ENCODE measurements at regions of chr1 and their contacts with region 1.

Region 1: GRCh38 chr1:245337829-245338484 is 183.2 kb downstream of the KIF26B start:
- DNase-seq: no peak
- H3K27ac ChIP-seq: no peak overlapping the region
- CTCF ChIP-seq: no peak

Region 2: GRCh38 chr1:245458719-245459181 is 120.8 kb after region 1 on chr1:
- CTCF ChIA-PET with region 1: no interaction called
- POLR2A ChIA-PET with region 1: interaction called, 11 read pairs
- DNase-seq: peak; percentile 30
- H3K27ac ChIP-seq: no peak overlapping the region
- CTCF ChIP-seq: no peak

Region 3: GRCh38 chr1:246128494-246129069 is 790.6 kb after region 1 on chr1:
- CTCF ChIA-PET with region 1: interaction called, 10 read pairs
- POLR2A ChIA-PET with region 1: no interaction called
- DNase-seq: no peak
- H3K27ac ChIP-seq: no peak overlapping the region
- CTCF ChIP-seq: no peak